Left colon (tissue), 2 donors: ENCODE measurements at regions of chr17 and their contacts with region 1.

Region 1: GRCh38 chr17:35764123-35764991 is 3.7 kb downstream of the C17orf50 start:
- DNase-seq: peak; percentile 85 to 93
- ATAC-seq: peak; percentile 88

Region 2: DNA sequence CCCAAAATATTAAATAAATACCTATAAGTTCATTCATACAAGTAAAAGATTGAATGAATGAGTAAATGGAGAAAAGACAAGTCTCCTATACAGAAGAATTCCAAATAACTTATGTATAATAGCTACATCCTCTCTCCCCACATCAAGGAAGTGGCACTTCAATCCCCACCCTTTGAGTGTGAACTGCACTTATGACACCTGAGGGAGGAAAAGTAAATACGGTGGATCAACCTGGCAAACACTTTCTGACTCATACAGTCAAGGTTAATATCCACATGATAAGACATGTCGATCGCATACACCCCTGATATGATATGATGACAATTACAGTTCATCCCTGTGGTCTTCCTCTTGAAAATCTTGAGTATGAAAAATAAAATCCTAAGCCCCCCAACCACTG is 244.9 kb before region 1 on chr17:
- intact Hi-C with region 1: no loop called
- DNase-seq: no peak
- ATAC-seq: peak; percentile 81

Region 3: GRCh38 chr17:35808962-35809854 is 44.9 kb after region 1 on chr17 and contains the start of gene TAF15:
- intact Hi-C with region 1: loop called (anchors 2 to 5 kb)
- DNase-seq: peak; percentile 95 to 98
- ATAC-seq: peak; percentile 90
- total RNA-seq, gene TAF15: 112 to 143 TPM